Dendritic cell treated with granulocyte-macrophage colony-stimulating factor and Interleukin-4, amounts not matched to agents 40 ng/mL and 50 ng/mL, for 4 days (primary cell): ENCODE measurements at regions of chr12 and their contacts with region 1.

Region 1: GRCh38 chr12:12562585-12563261 is at the start of gene DUSP16:
- H3K4me3 Mint-ChIP-seq: peak within 1 kb of the TSS; percentile 79
- H3K27ac Mint-ChIP-seq: peak within 1 kb of the TSS; percentile 87
- H3K4me1 Mint-ChIP-seq: peaks cover 36% of the 10 kb centered on the region
- H3K27me3 Mint-ChIP-seq: no peaks in the 10 kb centered on the region

Region 2: GRCh38 chr12:12356886-12357718 is 205.6 kb before region 1 on chr12 and contains the start of gene BORCS5:
- intact Hi-C with region 1: loop called (anchors 5 kb)
- H3K4me3 Mint-ChIP-seq: peak within 1 kb of the TSS; percentile 86
- H3K27ac Mint-ChIP-seq: peak within 1 kb of the TSS; percentile 99
- H3K4me1 Mint-ChIP-seq: peaks cover 22% of the 10 kb centered on the region
- H3K27me3 Mint-ChIP-seq: no peaks in the 10 kb centered on the region

Region 3: DNA sequence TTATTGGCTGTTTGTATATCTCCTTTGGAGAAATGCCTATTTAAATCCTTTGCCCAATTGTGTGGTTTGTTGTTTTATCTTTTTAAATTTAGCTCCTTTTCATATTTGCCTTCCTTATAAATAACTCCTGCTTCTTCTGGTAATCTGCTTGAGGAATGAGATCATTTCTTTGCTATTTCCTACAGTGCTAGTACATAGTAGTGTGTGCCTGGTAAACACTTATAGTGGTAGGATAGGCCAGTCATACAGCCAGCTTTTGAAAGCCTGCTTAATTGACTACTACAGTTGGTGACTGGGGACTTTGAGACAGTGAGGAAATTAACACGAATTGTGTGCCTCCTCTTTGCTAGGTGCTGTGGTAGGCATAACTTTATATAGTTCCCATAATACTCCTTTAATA is 137.1 kb before region 1 on chr12:
- intact Hi-C with region 1: no loop called
- H3K4me3 Mint-ChIP-seq: no peak overlapping the region
- H3K27ac Mint-ChIP-seq: no peak overlapping the region
- H3K4me1 Mint-ChIP-seq: no peaks in the 10 kb centered on the region
- H3K27me3 Mint-ChIP-seq: no peaks in the 10 kb centered on the region

Region 4: DNA sequence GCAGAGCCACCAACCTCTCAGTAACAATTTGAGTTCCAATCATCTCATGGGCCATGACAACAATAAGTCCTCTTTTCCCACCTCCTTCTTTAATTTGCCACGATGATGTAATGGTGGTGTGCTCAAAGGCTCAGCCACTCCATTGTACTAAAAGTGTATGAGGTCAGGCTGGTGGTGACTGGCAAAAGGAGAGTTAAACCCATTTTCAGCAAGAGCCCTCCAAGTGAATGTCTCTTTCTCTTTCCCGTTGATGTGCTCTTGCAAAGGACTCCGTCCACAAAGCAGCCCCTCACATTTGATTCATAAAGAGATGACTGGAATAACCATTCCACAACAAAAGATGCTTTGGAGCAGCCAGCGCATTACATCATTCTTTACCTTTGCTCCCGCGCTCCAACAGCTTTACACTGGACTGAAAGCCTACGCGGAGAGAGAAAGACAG is 41.7 kb before region 1 on chr12:
- intact Hi-C with region 1: loop called (anchors 5 kb)
- H3K4me3 Mint-ChIP-seq: no peak overlapping the region
- H3K27ac Mint-ChIP-seq: peak overlapping the region; percentile 77
- H3K4me1 Mint-ChIP-seq: peaks cover 47% of the 10 kb centered on the region
- H3K27me3 Mint-ChIP-seq: no peaks in the 10 kb centered on the region

Region 5: GRCh38 chr12:12654691-12655460 is 92.2 kb after region 1 on chr12:
- intact Hi-C with region 1: loop called (anchors 1 kb)
- H3K4me3 Mint-ChIP-seq: no peak overlapping the region
- H3K27ac Mint-ChIP-seq: peak overlapping the region; percentile 41
- H3K4me1 Mint-ChIP-seq: peaks cover 20% of the 10 kb centered on the region
- H3K27me3 Mint-ChIP-seq: no peaks in the 10 kb centered on the region

Region 6: GRCh38 chr12:12716793-12717585 is 154.3 kb after region 1 on chr12 and contains the start of gene CDKN1B:
- intact Hi-C with region 1: loop called (anchors 5 kb)
- H3K4me3 Mint-ChIP-seq: peak within 1 kb of the TSS; percentile 96
- H3K27ac Mint-ChIP-seq: peak within 1 kb of the TSS; percentile 100
- H3K4me1 Mint-ChIP-seq: peaks cover 46% of the 10 kb centered on the region
- H3K27me3 Mint-ChIP-seq: no peaks in the 10 kb centered on the region